Activated CD4-positive, alpha-beta T cell treated with anti-CD3 and anti-CD28 coated beads for 36 hours (primary cell): ENCODE measurements at regions of chr16 and their contacts with region 1.

Region 1: DNA sequence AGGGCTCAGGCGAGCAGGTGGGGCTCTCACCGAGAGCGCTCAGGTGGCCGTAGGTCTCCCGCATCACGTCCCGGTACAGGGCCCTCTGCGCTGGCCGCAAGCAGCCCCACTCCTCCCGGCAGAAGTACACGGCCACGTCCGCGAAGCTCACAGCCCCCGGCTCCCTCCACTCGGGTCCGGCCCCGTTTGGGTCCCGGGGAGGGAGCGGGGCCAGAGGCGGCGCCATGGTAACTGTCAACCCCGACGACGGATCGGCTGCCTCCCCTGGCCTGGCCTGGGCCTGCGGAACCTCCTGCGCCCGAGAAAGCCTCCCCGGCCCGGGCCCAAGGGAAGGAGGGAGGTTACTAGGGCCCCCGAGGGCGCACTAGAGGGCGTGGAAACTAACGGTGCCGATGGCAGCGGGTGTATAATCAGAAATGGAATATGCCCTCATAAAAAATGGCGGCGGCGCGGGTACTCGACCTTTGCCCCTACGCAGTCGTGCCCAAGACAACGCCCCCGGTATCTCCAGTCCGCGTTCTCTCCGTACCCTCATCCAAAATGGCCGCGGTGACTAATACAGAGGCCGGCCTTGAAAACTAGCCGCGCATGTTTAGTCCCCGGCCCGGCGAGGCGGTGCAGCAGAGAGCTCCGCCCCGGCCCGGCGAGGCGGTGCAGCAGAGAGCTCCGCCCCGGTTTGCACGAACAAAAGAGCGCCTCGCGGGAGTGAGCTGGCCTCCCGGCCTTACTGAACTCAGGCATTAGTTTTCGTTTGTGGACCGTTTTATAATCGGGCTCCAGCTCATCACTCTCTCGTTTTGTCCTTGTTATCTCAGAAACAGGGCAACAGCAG is at the start of gene ZNF764:
- DNase-seq: peak; percentile 99
- ATAC-seq: peak; percentile 96
- H3K4me3 Mint-ChIP-seq: peak within 1 kb of the TSS; percentile 85
- H3K27ac Mint-ChIP-seq: peak within 1 kb of the TSS; percentile 94
- H3K4me1 Mint-ChIP-seq: peaks cover 44% of the 10 kb centered on the region
- H3K27me3 Mint-ChIP-seq: no peaks in the 10 kb centered on the region
- total RNA-seq, gene ZNF764: 8.0 to 11.2 TPM

Region 2: DNA sequence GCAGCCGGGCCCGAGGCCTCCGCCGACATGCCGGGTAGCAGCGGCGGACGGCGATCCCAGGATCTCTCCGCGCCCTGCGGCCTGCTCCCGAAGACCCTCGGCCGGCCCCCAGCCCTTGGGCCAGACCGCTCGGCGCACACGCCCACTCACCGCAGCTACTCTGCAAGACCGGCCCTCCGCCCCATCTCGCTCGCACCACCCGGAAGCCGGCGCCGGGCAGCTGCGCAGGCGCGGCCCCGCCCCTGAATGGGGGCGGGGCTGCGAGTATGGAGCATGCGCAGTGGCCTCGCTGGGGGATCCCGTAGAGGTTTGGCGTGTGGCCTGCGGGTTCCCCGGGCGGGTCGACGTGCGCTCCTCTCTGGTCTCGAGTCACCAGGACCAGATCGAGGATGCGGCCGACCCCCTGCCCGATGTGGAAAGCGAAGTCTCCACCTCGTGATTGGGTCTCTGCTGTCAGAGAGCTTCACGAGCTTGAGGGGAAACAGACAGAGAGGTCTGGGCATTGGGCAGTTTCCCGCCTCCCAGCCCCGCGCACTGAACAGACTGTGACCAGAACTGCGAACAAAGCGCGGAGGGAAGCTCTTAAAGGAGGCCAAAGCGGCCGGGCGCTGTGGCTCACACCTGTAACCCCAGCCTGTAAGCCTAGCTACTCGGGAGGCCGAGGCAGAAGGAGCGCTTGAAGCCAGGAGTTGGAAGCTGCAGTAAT is 632.0 kb before region 1 on chr16 and contains the start of gene KCTD13:
- CTCF ChIA-PET with region 1: no interaction called
- POLR2A ChIA-PET with region 1: no interaction called
- intact Hi-C with region 1: no loop called
- DNase-seq: peak; percentile 92
- ATAC-seq: peak; percentile 90
- H3K4me3 Mint-ChIP-seq: peak within 1 kb of the TSS; percentile 82
- H3K27ac Mint-ChIP-seq: peak within 1 kb of the TSS; percentile 95
- H3K4me1 Mint-ChIP-seq: peaks cover 32% of the 10 kb centered on the region
- H3K27me3 Mint-ChIP-seq: no peaks in the 10 kb centered on the region
- total RNA-seq, gene KCTD13: 30.4 to 33.4 TPM

Region 3: DNA sequence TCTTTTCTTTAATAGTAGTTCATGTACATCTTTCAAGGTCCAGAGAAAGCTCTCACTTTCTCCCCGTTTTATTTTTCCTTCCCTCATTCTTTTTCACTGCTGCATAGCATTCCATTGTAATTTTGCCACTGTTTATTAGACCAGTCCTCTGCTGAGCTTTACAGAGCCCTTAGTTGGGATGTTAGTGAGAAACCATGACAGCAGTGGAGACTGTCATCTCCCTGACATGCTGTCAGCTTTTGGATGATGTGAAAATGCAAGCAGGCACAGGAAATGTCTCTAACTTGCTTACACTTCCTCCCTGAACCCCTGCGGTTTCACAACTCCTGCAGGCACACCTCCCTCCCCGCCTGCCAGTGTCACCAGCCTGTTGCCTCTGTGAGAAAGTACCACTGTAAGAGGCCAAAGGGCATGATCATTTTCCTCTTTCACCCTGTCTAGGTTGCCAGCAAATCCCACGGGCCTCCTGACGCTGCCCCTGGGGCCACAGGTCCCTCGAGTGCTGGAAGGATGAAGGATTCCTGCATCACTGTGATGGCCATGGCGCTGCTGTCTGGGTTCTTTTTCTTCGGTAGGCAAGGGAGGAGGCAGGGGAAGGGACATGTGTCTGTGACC is 85.7 kb before region 1 on chr16 and contains the start of gene ITGAL:
- CTCF ChIA-PET with region 1: interaction called, 3 read pairs
- POLR2A ChIA-PET with region 1: no interaction called
- intact Hi-C with region 1: loop called in 1 of 2 experiments (anchors 2 kb)
- DNase-seq: peak; percentile 93
- ATAC-seq: peak; percentile 62
- H3K4me3 Mint-ChIP-seq: peak within 1 kb of the TSS; percentile 95
- H3K27ac Mint-ChIP-seq: peak within 1 kb of the TSS; percentile 99
- H3K4me1 Mint-ChIP-seq: peaks cover 63% of the 10 kb centered on the region
- H3K27me3 Mint-ChIP-seq: no peaks in the 10 kb centered on the region
- total RNA-seq, gene ITGAL: 210 to 222 TPM

Region 4: GRCh38 chr16:30585400-30586189 is 27.4 kb after region 1 on chr16 and contains the start of gene ZNF785:
- CTCF ChIA-PET with region 1: interaction called, 4 read pairs
- POLR2A ChIA-PET with region 1: interaction called, 7 read pairs
- intact Hi-C with region 1: loop called in 1 of 2 experiments (anchors 1 kb)
- DNase-seq: peak; percentile 96
- ATAC-seq: peak; percentile 99
- H3K4me3 Mint-ChIP-seq: peak within 1 kb of the TSS; percentile 87
- H3K27ac Mint-ChIP-seq: peak within 1 kb of the TSS; percentile 92
- H3K4me1 Mint-ChIP-seq: peaks cover 37% of the 10 kb centered on the region
- H3K27me3 Mint-ChIP-seq: no peaks in the 10 kb centered on the region
- total RNA-seq, gene ZNF785: 9.2 to 10.8 TPM

Region 5: DNA sequence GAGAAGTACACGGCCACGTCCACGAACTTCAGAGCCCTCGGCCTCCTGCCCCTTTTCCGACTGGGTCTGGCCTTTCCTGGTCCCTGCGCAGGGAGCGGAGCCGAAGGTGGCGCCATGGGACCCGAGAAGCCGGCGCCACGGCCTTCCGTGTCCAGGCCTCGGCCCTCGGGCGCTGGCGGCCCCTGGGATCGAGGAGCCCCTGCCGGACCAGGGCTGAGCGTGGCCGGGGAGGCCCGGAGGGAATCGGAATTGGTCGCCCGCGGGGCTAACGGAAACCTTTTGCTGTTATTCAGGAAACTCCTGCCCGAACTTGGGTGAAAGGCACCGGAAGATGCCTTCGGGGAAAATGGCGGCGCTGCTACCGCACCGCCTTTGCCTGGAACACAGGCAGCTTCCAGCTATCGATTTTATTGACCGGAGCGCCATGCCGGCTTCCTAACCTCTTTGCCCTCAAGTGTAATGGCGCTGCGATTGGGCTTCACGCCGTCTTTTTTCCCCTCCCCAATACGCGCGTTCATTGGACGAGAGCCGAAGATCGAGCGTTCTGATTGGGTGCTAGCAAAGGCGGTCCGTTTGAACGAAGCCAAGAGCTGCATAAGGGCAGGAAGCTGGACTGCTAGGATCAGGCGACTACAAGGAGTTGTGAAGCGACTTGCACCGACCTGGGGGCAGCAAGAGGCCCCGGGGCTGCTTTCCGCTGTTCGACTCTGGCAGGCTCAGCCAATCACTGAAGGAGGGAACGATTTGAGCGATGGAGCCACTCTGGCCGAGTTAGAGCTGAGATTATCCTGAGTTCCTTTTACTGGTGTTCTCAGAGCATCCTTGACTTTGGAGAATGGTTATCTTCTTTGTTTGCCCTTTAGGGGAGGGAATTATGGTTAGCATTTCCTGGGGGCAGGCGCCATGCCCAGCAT is 52.0 kb after region 1 on chr16 and contains the start of gene ZNF689:
- CTCF ChIA-PET with region 1: interaction called, 5 read pairs
- POLR2A ChIA-PET with region 1: no interaction called
- intact Hi-C with region 1: loop called in 1 of 2 experiments (anchors 1 kb)
- DNase-seq: peak; percentile 96
- ATAC-seq: peak; percentile 88
- H3K4me3 Mint-ChIP-seq: peak within 1 kb of the TSS; percentile 80
- H3K27ac Mint-ChIP-seq: peak within 1 kb of the TSS; percentile 96
- H3K4me1 Mint-ChIP-seq: peaks cover 19% of the 10 kb centered on the region
- H3K27me3 Mint-ChIP-seq: no peaks in the 10 kb centered on the region
- total RNA-seq, gene ZNF689: 9.0 to 10.7 TPM

Region 6: DNA sequence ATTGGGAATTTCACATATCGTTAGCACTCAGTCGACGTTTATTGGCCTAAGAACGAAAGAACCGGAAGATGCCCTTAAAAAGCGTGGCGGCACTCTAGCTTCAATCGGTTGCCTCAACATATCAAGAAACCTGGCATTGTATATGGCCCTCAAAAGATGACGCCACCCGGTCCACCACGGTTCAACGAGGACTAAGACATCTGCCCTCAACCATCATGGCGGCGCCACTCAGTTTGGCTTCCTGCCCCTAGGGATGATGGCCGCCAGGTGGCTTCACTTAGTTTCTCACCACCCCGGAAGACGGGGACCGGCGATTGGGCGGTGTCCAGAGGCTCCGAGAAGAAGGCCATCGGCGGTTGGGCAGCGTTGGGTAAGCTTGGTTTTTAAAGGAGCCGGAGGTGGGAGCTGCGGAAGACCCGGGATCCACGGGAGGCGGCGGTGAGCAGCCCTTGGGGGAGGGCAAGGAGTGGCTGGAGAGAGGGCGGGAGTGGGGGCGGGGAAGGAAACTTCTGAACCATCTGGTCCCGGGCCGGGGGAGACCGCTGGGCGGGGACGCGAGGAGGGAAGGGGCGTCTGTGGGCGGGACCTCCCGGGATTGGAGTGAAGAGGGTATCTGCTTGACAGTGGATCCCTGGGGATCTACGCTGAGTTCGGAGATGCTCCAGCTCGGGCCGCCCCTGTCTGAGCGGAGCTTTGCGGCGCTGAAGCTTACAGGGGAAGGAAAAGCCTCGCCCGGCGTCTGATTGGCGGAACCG is 92.4 kb after region 1 on chr16 and contains the start of gene PRR14:
- CTCF ChIA-PET with region 1: no interaction called
- POLR2A ChIA-PET with region 1: interaction called, 4 read pairs
- intact Hi-C with region 1: loop called in 1 of 2 experiments (anchors 1 kb)
- DNase-seq: peak; percentile 100
- ATAC-seq: peak; percentile 82
- H3K4me3 Mint-ChIP-seq: peak within 1 kb of the TSS; percentile 95
- H3K27ac Mint-ChIP-seq: peak within 1 kb of the TSS; percentile 97
- H3K4me1 Mint-ChIP-seq: peaks cover 21% of the 10 kb centered on the region
- H3K27me3 Mint-ChIP-seq: no peaks in the 10 kb centered on the region
- total RNA-seq, gene PRR14: 76.8 to 77.8 TPM

Region 7: GRCh38 chr16:30707421-30707820 is 149.2 kb after region 1 on chr16:
- CTCF ChIA-PET with region 1: no interaction called
- POLR2A ChIA-PET with region 1: no interaction called
- intact Hi-C with region 1: no loop called
- DNase-seq: no peak
- ATAC-seq: no peak
- H3K4me3 Mint-ChIP-seq: no peak overlapping the region
- H3K27ac Mint-ChIP-seq: no peak overlapping the region
- H3K4me1 Mint-ChIP-seq: peaks cover 4% of the 10 kb centered on the region
- H3K27me3 Mint-ChIP-seq: no peaks in the 10 kb centered on the region

Region 8: DNA sequence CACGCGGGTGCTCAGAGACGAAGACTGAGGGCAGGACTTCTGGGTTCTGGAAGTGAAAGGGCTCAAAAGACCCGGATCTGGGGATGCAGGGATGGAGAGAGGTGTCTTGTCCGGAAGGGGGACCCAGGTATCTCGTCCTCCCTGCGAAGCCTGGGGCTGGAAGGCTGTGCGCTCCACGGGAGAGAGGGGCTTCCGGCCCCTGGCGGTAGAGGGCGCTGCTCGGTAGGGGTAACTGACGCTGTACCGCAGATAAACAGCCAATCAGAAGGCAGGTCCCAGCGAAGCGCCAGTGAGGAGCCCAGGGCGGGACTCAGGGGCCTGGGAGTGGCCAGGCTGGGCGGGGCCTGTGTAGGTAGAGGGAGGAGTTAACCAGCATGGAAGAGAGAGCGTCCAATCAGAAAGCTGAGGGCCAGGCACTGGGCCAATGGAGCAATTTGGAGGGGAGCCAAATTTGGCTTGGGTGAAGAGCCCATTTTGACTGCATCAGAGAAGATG is 914.6 kb after region 1 on chr16:
- CTCF ChIA-PET with region 1: no interaction called
- POLR2A ChIA-PET with region 1: no interaction called
- intact Hi-C with region 1: no loop called
- DNase-seq: peak; percentile 74
- ATAC-seq: peak; percentile 54
- H3K4me3 Mint-ChIP-seq: peak overlapping the region; percentile 54
- H3K27ac Mint-ChIP-seq: no peak overlapping the region
- H3K4me1 Mint-ChIP-seq: peaks cover 22% of the 10 kb centered on the region
- H3K27me3 Mint-ChIP-seq: peaks cover 18% of the 10 kb centered on the region